Activated naive CD4-positive, alpha-beta T cell treated with anti-CD3 and anti-CD28 coated beads for 36 hours (primary cell): ENCODE measurements at regions of chr3 and their contacts with region 1.

Region 1: DNA sequence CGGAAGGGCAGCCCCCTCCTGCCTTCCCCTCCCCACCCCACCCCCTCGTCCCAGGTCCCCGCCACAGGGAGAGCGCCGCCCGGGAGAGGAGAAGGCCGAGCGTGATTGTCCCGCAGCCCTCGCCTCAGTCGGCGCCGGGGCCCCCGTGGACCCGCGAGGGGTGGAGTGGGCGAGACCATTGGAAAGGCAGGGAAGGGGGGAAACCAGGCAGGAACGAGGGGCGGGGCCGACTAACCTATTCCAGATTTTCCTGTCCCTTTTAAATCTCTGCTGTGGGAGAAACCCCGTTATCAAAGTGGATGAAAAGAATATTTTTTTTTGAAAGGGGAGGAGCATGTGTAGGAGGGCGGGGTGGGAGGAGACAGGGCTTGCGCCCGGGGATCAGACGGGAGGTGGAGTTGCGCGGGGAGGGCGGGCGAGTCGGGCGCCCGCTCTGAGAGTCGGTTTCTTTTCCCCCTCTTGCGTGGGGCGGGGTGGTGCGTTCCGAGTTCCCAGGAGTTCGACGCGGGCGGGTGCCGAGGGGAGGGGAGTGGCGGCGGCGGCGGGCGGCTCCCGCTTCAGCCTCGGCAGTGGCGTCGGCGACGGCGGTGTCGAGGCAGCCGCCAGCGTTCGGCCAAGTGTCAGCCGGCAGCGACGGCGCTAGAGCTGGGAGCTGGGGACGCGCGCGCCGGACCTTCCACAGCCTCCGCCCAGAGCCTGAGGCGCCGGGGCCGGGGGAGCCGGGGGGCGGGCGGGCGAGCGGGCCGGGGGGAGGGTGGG is at the start of gene NECTIN3:
- DNase-seq: peak; percentile 91
- H3K4me3 Mint-ChIP-seq: peak within 1 kb of the TSS; percentile 85
- H3K27ac Mint-ChIP-seq: peak within 1 kb of the TSS; percentile 27
- H3K4me1 Mint-ChIP-seq: peaks cover 24% of the 10 kb centered on the region
- H3K27me3 Mint-ChIP-seq: peaks cover 40% of the 10 kb centered on the region
- total RNA-seq, gene NECTIN3: 3.0 to 3.5 TPM

Region 2: GRCh38 chr3:109275702-109276293 is 1795.6 kb before region 1 on chr3:
- CTCF ChIA-PET with region 1: no interaction called
- intact Hi-C with region 1: loop called (anchors 10 kb)
- DNase-seq: peak; percentile 34
- H3K4me3 Mint-ChIP-seq: no peak overlapping the region
- H3K27ac Mint-ChIP-seq: no peak overlapping the region
- H3K4me1 Mint-ChIP-seq: no peaks in the 10 kb centered on the region
- H3K27me3 Mint-ChIP-seq: peaks cover 4% of the 10 kb centered on the region

Region 3: DNA sequence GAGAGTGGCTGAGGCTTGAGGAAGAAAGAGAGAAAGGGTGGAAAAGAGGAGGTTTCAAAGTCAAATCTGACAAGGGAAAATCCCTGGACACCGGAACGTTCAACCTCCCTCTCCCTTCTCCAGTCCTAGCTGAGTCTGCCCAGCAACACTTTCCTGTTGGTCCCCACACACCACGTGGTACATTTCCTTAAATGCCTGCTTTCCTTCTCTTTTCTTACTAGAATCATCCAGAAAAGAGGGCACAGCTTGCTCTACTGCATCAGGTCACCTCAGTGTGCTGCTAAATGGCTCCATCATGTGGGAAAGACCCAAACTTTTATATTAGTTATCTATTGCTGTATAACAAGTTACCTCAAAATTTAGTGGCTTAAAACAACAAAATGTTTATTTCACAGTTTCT is 181.3 kb after region 1 on chr3:
- CTCF ChIA-PET with region 1: no interaction called
- intact Hi-C with region 1: loop called (anchors 5 kb)
- DNase-seq: no peak
- H3K4me3 Mint-ChIP-seq: no peak overlapping the region
- H3K27ac Mint-ChIP-seq: no peak overlapping the region
- H3K4me1 Mint-ChIP-seq: peaks cover 4% of the 10 kb centered on the region
- H3K27me3 Mint-ChIP-seq: peaks cover 4% of the 10 kb centered on the region

Region 4: DNA sequence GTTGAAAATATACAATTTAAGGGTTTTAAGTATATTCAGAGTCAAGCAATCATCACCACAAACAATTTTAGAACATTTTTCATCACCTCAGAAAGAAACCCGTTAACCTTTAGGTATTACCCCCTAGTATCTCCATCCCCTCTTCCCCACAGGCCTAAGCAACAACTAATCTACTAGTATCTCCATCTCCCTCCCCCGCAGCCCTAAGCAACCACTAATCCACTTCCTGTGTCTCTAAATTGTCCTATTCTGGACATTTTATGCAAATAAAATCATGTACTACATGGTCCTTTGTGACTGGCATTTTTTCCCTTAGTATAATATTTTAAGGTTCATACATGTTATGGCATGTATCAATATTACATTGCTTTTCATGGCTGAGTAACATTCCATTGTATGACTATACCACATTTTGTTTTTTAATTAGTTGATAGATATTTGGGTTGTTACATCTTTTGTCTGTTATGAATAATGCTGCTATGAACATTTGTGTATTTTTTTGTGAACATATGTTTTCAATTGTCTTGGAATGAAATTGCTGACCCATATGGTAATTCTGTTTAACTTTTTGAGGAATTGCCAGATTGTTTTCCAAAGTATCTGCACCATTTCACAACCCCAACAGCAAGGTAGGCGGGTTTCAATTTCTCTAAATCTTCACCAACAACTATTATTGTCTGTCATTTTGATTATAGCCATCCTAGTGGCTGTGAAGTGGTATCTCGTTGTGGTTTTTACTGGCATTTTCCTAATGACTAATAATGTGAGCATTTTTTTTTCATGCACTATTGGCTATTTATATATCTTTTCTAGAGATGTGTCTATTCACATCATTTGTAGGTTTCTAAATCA is 254.9 kb after region 1 on chr3:
- CTCF ChIA-PET with region 1: no interaction called
- intact Hi-C with region 1: loop called (anchors 5 kb)
- DNase-seq: no peak
- H3K4me3 Mint-ChIP-seq: no peak overlapping the region
- H3K27ac Mint-ChIP-seq: no peak overlapping the region
- H3K4me1 Mint-ChIP-seq: peaks cover 34% of the 10 kb centered on the region
- H3K27me3 Mint-ChIP-seq: no peaks in the 10 kb centered on the region